ENCODE measurements at regions of chr17 and their contacts with region 1.

Region 1: DNA sequence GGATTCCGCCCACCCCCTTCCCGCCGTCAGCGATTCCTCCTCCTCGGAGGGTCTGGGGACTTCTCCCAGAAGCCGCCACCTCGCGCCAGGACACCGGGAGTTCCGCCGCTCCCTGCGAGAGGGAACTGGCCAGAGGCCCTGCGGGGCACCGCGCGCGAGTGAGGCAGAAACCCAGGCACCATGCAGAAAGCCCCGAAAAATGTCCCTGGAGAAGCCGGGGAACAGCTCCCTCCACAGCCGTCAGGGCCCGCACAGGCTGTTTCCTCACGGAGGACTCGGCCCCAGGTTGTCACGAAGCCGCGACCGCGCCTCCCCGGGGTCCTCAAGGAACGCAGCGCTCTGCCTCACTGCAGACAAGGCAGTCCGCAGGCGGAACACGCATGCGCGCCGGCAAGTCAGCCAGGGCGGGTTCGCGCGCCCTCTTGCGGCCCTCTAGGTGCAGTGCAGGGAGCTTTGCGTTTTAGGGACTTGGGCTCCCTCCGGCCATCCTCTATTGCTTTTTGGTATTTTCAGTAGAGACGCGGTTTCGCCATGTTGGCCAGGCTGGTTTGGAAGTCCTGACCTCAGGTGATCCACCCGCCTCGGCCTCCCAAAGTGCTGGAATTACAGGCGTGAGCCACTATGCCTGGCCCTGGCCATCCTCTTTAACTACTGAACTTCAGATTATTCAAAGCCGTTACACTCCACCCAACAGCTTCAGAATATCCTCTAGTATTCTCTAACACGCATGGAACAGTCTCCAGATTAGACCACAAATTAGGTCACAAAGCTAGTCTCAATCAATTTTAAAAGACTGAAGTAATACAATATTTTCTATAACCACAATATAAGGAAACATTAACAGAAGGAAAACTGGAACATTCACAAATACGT is 20.3 kb upstream of the ZNF287 start:
- DNase-seq: peak; percentile 95
- ATAC-seq: peak; percentile 90
- H3K4me3 Mint-ChIP-seq: peak overlapping the region; percentile 64
- H3K27ac Mint-ChIP-seq: no peak overlapping the region
- H3K4me1 Mint-ChIP-seq: peaks cover 8% of the 10 kb centered on the region
- H3K27me3 Mint-ChIP-seq: peaks cover 34% of the 10 kb centered on the region

Region 2: GRCh38 chr17:16285957-16286640 is 303.2 kb before region 1 on chr17:
- CTCF ChIA-PET with region 1: no interaction called
- POLR2A ChIA-PET with region 1: no interaction called
- intact Hi-C with region 1: loop called in 1 of 2 experiments (anchors 5 kb)
- DNase-seq: peak; percentile 90
- ATAC-seq: peak; percentile 94
- H3K4me3 Mint-ChIP-seq: peak overlapping the region; percentile 66
- H3K27ac Mint-ChIP-seq: peak overlapping the region; percentile 96
- H3K4me1 Mint-ChIP-seq: peaks cover 53% of the 10 kb centered on the region
- H3K27me3 Mint-ChIP-seq: no peaks in the 10 kb centered on the region

Region 3: DNA sequence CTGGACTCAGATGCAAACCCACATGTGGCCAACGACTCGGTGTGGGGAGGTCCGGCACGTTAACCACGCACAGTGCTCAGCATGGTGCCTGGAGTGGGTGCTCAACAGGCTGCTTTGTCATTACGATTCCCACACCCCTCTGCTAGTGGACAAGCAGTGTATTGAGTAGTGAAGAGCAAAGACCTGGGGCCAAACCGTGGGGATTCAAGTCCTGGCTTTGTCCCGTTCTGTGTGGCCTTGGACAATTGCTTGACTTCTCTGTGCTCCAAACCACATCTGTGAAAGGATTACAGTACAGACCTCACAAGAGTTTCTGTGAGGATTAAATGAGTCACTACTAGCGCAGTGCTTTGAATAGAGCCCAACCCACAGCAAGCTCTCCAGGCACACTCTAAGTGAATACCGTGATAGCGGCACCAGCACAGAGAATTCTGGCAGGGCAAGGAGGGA is 140.2 kb before region 1 on chr17:
- CTCF ChIA-PET with region 1: interaction called, 5 read pairs
- POLR2A ChIA-PET with region 1: no interaction called
- intact Hi-C with region 1: loop called in 1 of 2 experiments (anchors 2 kb)
- DNase-seq: no peak
- ATAC-seq: peak; percentile 71
- H3K4me3 Mint-ChIP-seq: no peak overlapping the region
- H3K27ac Mint-ChIP-seq: no peak overlapping the region
- H3K4me1 Mint-ChIP-seq: peaks cover 42% of the 10 kb centered on the region
- H3K27me3 Mint-ChIP-seq: no peaks in the 10 kb centered on the region

Region 4: GRCh38 chr17:16568541-16569357 is 20.6 kb before region 1 on chr17 and contains the start of gene ZNF287:
- CTCF ChIA-PET with region 1: interaction called, 47 read pairs
- POLR2A ChIA-PET with region 1: no interaction called
- intact Hi-C with region 1: loop called (anchors 1 kb)
- DNase-seq: peak; percentile 96
- ATAC-seq: peak; percentile 99
- H3K4me3 Mint-ChIP-seq: peak within 1 kb of the TSS; percentile 79
- H3K27ac Mint-ChIP-seq: no peak within 1 kb of the TSS
- H3K4me1 Mint-ChIP-seq: peaks cover 14% of the 10 kb centered on the region
- H3K27me3 Mint-ChIP-seq: peaks cover 3% of the 10 kb centered on the region
- total RNA-seq, gene ZNF287: 9.4 TPM

Region 5: DNA sequence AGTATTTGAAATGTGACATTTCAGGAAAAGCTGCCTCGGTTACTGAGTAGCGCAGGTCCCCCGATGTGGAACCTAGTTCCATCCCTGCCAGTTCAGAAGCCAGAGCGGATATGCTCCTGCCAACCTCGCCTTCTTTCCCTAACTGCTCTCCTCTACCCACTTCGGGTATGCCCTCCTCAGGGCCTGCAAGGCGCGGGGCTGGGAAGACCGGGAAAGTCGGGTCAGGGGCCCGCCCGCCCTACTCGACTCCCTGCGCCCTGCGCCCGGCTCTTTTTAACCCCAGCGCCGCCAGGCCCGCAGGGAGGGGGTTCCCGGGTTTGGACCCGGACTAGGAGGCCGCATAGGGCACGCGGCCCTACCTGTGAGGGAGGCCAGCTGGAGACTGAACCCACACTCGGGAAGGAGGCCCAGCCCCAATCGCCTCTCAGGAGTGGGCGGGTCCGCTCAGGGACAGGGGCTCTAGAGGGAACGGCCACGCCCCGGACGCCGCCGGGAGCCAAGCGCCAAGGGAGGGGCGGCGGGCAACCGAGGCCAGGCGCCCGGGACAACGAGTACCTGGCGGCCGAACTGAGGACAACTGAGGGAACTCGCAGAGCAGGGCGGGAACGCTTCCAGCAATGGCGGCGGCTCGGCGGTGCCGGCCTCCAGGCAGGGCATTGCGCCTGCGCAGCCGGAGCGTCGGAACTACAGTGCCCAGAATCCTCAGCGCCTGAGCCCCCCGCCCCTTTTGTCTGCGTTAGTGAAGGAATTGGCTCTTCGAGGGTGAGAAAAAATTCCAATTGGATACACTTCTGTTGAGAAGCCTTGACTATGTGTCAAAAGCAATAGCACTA is 64.1 kb after region 1 on chr17 and contains the start of gene ZNF624:
- CTCF ChIA-PET with region 1: interaction called, 4 read pairs
- POLR2A ChIA-PET with region 1: no interaction called
- intact Hi-C with region 1: loop called (anchors 2 to 5 kb)
- DNase-seq: peak; percentile 94
- ATAC-seq: peak; percentile 97
- H3K4me3 Mint-ChIP-seq: peak within 1 kb of the TSS; percentile 81
- H3K27ac Mint-ChIP-seq: peak within 1 kb of the TSS; percentile 73
- H3K4me1 Mint-ChIP-seq: peaks cover 18% of the 10 kb centered on the region
- H3K27me3 Mint-ChIP-seq: peaks cover 5% of the 10 kb centered on the region
- total RNA-seq, gene ZNF624: 3.7 to 4.4 TPM

Region 6: DNA sequence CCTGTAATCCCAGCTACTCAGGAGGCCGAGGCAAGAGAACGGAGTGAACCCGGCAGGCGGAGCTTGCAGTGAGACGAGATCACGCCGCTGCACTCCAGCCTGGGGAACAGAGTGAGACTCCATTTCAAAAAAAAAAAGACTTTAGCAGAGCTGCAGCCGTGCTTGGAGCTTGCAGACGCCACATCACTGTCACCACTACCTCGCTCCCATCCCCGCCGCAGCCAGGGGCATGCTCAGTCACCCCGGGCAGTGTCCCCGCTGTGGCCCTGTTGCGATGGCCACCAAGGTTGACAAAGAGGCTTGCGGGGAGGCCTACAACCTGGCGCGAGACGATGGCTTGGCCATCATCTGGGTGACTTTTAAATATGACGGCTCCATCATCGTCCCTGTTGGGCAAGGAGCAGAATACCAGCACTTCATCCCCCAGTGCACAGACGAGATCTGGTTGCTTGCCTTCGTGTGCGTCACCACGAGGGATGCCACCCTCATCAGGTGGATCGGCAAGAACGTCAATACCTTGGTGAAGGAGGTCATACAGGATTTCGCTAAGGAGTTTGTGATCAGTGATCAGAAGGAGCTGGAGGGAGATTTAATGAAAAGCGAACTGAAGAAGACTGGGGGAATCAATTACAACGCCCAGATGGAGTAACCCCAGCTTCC is 264.5 kb after region 1 on chr17:
- CTCF ChIA-PET with region 1: no interaction called
- POLR2A ChIA-PET with region 1: no interaction called
- intact Hi-C with region 1: no loop called
- DNase-seq: no peak
- ATAC-seq: no peak
- H3K4me3 Mint-ChIP-seq: no peak overlapping the region
- H3K27ac Mint-ChIP-seq: no peak overlapping the region
- H3K4me1 Mint-ChIP-seq: no peaks in the 10 kb centered on the region
- H3K27me3 Mint-ChIP-seq: no peaks in the 10 kb centered on the region

Measured in activated CD4-positive, alpha-beta T cell treated with anti-CD3 and anti-CD28 coated beads for 36 hours (primary cell).